ENCODE measurements at regions of chr3 and their contacts with region 1.

Region 1: GRCh38 chr3:172039436-172040077 is at the start of gene FNDC3B:
- DNase-seq: peak; percentile 80 to 96
- H3K4me3 ChIP-seq: peak within 1 kb of the TSS; percentile 85 to 94
- H3K27ac ChIP-seq: peak within 1 kb of the TSS; percentile 99 to 100
- H3K4me1 ChIP-seq: peaks cover 5 to 18% of the 10 kb centered on the region in 2 donors
- H3K27me3 ChIP-seq: no peaks in the 10 kb centered on the region
- CTCF ChIP-seq: no peak
- total RNA-seq, gene FNDC3B: 54.9 TPM

Region 2: DNA sequence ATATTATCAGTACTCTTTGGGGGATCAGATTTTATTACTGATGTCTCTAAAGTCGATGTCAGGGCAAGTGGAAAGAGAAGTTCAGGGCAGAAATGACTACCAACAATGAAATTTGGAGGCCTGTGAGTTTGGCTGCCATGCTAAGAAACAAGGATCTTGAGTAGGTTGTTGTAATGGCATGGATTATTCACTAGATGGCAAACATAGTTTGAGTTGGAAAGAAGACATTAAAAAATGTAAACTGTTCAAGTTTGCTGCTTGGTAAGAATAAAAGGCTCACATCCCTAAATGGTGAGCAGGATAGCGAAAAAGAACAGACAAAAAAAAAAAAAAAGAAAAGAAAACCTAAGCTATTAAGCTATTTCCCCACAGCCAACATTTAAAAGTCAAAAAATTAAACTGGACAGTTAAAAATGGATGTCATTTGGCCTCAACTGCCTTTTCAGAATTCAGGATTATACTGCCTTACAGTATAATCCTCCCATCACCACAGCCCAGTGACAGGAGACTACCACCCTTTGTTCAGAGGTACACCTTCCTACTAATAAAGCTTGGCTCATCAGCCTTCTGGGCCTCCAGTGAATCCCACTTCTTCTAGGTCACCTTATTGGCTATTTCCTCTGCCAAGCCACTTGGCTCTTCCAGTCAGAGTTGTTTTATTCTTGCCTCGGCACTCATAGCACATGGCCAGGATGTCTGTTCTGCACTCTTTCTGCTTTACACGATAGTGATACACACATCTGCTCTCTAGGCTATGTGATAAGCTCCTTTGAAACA is 393.0 kb before region 1 on chr3:
- intact Hi-C with region 1: loop called (anchors 5 kb)
- DNase-seq: no peak
- H3K4me3 ChIP-seq: no peak overlapping the region
- H3K27ac ChIP-seq: peak overlapping the region; percentile 8 to 49
- H3K4me1 ChIP-seq: no peaks in the 10 kb centered on the region
- H3K27me3 ChIP-seq: no peaks in the 10 kb centered on the region
- CTCF ChIP-seq: peak; percentile 55 to 78 (median 73)

Region 3: DNA sequence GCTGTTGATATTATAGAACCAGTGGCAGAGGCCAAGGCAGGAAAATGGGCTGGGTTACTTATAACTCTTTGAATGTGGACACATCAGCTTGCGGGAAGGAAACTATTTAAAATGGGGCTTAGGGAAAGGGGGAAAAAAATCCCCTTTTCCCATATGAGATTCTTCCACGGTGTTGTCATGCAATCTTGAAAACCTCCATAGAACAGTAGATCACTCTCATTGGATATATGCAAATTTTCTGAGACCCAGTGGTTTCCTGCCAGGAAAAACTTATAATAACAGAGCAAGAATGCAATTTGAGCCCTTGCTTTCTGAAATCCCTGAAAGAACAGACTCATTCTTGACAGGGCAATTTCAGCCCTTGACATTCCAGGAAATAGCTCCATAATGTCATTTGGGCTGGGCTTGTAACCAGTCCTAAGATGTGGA is 165.3 kb before region 1 on chr3:
- intact Hi-C with region 1: loop called (anchors 10 kb)
- DNase-seq: peak in 1 of 2 donors; percentile 67
- H3K4me3 ChIP-seq: no peak overlapping the region
- H3K27ac ChIP-seq: peak overlapping the region; percentile 56 to 70
- H3K4me1 ChIP-seq: peaks cover 10 to 22% of the 10 kb centered on the region in 2 donors
- H3K27me3 ChIP-seq: no peaks in the 10 kb centered on the region
- CTCF ChIP-seq: no peak

Region 4: GRCh38 chr3:171994646-171995428 is 44.7 kb before region 1 on chr3:
- intact Hi-C with region 1: no loop called
- DNase-seq: no peak
- H3K4me3 ChIP-seq: no peak overlapping the region
- H3K27ac ChIP-seq: no peak overlapping the region
- H3K4me1 ChIP-seq: no peaks in the 10 kb centered on the region
- H3K27me3 ChIP-seq: no peaks in the 10 kb centered on the region
- CTCF ChIP-seq: no peak

Region 5: GRCh38 chr3:172057059-172057458 is 17.5 kb after region 1 on chr3:
- intact Hi-C with region 1: loop called (anchors 2 kb)
- DNase-seq: no peak
- H3K4me3 ChIP-seq: no peak overlapping the region
- H3K27ac ChIP-seq: peak overlapping the region; percentile 43 to 71
- H3K4me1 ChIP-seq: peaks cover 4 to 54% of the 10 kb centered on the region in 2 donors
- H3K27me3 ChIP-seq: no peaks in the 10 kb centered on the region
- CTCF ChIP-seq: no peak

Region 6: GRCh38 chr3:172129870-172130683 is 90.5 kb after region 1 on chr3:
- intact Hi-C with region 1: loop called (anchors 2 kb)
- DNase-seq: peak; percentile 91 to 98
- H3K4me3 ChIP-seq: no peak overlapping the region
- H3K27ac ChIP-seq: peak overlapping the region; percentile 79 to 83
- H3K4me1 ChIP-seq: peaks cover 0 to 41% of the 10 kb centered on the region in 2 donors
- H3K27me3 ChIP-seq: no peaks in the 10 kb centered on the region
- CTCF ChIP-seq: no peak

Region 7: GRCh38 chr3:172142051-172142863 is 102.7 kb after region 1 on chr3:
- intact Hi-C with region 1: no loop called
- DNase-seq: no peak
- H3K4me3 ChIP-seq: no peak overlapping the region
- H3K27ac ChIP-seq: peak overlapping the region; percentile 33 to 77
- H3K4me1 ChIP-seq: peaks cover 10 to 47% of the 10 kb centered on the region in 2 donors
- H3K27me3 ChIP-seq: no peaks in the 10 kb centered on the region
- CTCF ChIP-seq: no peak

Region 8: DNA sequence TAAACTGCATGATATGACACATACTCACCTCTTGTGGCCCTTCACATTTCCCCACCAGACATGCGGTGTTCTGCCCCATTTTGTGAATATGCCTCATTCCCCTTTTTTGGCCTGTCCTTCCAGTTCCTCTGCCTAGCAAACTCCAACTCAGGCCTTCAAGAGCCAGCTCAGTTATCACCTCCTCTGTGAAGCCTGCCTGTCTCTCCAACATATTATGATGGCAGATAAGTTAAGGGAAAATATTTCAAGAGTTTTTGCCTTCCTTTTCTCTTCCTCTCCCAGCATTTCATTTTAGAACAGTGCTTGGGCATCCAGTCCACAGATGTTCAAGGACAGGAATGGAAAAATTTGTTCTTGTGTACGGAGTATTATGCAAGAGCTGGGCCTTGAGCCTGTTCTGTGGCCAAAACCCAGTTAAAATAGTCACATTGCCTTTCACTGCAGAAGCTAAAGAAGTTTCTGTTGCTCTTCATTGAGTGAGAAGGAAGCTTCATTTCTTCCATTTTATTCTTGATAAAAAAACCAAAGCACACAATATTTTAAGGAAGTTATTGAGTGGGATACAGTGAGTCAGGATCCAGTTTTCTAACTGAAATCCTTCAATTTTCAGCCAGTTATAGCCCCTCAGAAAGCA is 216.7 kb after region 1 on chr3:
- intact Hi-C with region 1: loop called (anchors 5 kb)
- DNase-seq: peak in 1 of 2 donors; percentile 83
- H3K4me3 ChIP-seq: no peak overlapping the region
- H3K27ac ChIP-seq: peak overlapping the region; percentile 89 to 91
- H3K4me1 ChIP-seq: peaks cover 25 to 54% of the 10 kb centered on the region in 2 donors
- H3K27me3 ChIP-seq: no peaks in the 10 kb centered on the region
- CTCF ChIP-seq: no peak

Region 9: DNA sequence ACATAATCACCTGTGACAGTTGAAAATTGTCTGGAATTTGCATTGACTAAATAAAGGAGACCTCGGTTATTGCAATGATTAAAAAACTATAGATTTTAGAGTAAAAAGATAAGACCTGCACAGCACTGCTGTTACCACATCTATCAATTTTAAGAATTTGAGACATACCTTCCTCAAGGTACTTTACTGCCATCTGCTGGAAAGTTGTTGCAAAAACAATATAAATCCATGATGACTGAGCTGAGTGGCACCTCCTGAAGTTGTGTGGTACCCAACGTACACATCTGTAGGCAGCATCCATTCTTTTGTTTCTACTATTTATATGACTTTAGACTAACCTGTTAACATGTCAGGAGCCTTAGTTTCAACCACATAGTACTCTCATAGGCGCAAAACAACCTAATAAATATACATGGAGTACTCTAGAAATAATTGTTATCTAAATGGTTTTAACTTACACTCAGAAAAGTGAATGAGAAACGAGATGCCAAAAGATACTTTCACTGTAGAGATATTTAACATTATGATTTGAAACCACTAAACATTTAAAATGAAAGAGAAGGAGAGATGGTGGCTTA is 302.0 kb after region 1 on chr3:
- intact Hi-C with region 1: loop called (anchors 2 kb)
- DNase-seq: no peak
- H3K4me3 ChIP-seq: no peak overlapping the region
- H3K27ac ChIP-seq: no peak overlapping the region
- H3K4me1 ChIP-seq: no peaks in the 10 kb centered on the region
- H3K27me3 ChIP-seq: no peaks in the 10 kb centered on the region
- CTCF ChIP-seq: peak; percentile 62 to 77 (median 68)

Measured in ascending aorta (tissue), 2 donors.